ENCODE measurements at regions of chr16 and their contacts with region 1.

Region 1: DNA sequence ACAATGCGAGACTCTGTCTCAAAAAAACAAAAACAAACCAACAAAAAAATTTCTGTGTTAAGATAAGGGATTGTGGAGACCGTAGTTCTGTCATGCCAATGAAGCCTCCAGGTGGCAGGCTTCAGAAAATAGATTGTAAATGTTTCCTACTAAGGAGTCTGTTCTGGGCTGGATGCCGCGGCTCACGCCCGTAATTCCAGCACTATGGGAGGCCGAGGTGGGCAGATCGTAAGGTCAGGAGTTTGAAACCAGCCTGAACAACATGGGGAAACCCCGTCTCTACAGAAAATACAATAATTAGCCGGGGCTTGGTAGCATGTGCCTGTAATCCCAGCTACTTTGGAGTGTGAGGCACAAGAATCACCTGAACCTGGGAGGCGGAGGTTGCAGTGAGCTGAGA is 4.4 kb upstream of the SNX29 start:
- DNase-seq: peak in 1 of 2 experiments; percentile 34
- H3K4me3 ChIP-seq: no peak overlapping the region
- H3K4me3 Mint-ChIP-seq: no peak overlapping the region
- H3K27ac Mint-ChIP-seq: no peak overlapping the region
- H3K4me1 ChIP-seq: no peaks in the 10 kb centered on the region
- H3K4me1 Mint-ChIP-seq: peaks cover 9% of the 10 kb centered on the region
- H3K27me3 ChIP-seq: no peaks in the 10 kb centered on the region
- H3K27me3 Mint-ChIP-seq: no peaks in the 10 kb centered on the region
- CTCF ChIP-seq: peak in 1 of 2 experiments; percentile 44

Region 2: GRCh38 chr16:11949527-11949926 is 22.6 kb before region 1 on chr16:
- CTCF ChIA-PET with region 1: interaction called, 6 read pairs
- POLR2A ChIA-PET with region 1: no interaction called
- intact Hi-C with region 1: loop called (anchors 1 kb)
- DNase-seq: peak; percentile 56 to 68
- H3K4me3 ChIP-seq: no peak overlapping the region
- H3K4me3 Mint-ChIP-seq: no peak overlapping the region
- H3K27ac Mint-ChIP-seq: no peak overlapping the region
- H3K4me1 ChIP-seq: no peaks in the 10 kb centered on the region
- H3K4me1 Mint-ChIP-seq: no peaks in the 10 kb centered on the region
- H3K27me3 ChIP-seq: no peaks in the 10 kb centered on the region
- H3K27me3 Mint-ChIP-seq: no peaks in the 10 kb centered on the region
- CTCF ChIP-seq: peak; percentile 23 to 51

Region 3: GRCh38 chr16:12000032-12000431 is 27.9 kb after region 1 on chr16:
- CTCF ChIA-PET with region 1: no interaction called
- POLR2A ChIA-PET with region 1: no interaction called
- intact Hi-C with region 1: no loop called
- DNase-seq: no peak
- H3K4me3 ChIP-seq: no peak overlapping the region
- H3K4me3 Mint-ChIP-seq: no peak overlapping the region
- H3K27ac Mint-ChIP-seq: no peak overlapping the region
- H3K4me1 ChIP-seq: no peaks in the 10 kb centered on the region
- H3K4me1 Mint-ChIP-seq: no peaks in the 10 kb centered on the region
- H3K27me3 ChIP-seq: no peaks in the 10 kb centered on the region
- H3K27me3 Mint-ChIP-seq: no peaks in the 10 kb centered on the region
- CTCF ChIP-seq: no peak

Measured in Caco-2 (cell line).